Activated naive CD4-positive, alpha-beta T cell treated with anti-CD3 and anti-CD28 coated beads for 36 hours (primary cell): ENCODE measurements at regions of chr19 and their contacts with region 1.

Region 1: DNA sequence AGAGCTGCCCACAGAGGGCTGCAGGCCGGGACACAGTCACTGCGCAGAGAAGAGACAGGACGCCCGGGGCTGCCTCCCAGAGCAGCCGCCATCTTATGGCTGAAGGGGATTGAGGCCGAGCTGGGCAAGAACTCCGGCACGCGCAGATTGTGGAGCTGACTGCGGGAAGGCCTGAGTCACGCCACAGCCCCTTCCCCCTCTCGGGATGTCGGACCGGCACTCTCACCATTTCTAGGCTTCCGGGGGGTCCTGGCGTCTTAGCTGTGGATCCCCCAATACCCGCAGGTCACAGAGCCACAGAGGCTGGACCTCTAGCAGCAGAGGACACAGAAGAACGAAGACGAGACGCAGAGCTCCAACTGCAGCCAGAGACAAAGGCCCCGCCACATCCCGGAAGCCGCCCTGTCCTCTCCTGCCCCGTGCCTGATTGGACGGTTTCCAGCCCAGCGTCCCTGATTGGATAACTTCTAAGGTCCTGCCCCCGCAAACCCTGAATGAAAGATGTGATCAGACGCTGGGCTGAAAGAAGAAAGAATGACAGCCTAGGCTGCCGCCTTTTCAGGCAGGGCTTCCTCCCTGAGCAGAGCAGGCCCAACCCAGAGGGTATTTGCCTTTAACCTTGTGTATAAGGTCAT is at the start of gene ZNF43:
- DNase-seq: peak; percentile 97
- H3K4me3 Mint-ChIP-seq: peak within 1 kb of the TSS; percentile 98
- H3K27ac Mint-ChIP-seq: peak within 1 kb of the TSS; percentile 99
- H3K4me1 Mint-ChIP-seq: peaks cover 37% of the 10 kb centered on the region
- H3K27me3 Mint-ChIP-seq: no peaks in the 10 kb centered on the region
- total RNA-seq, gene ZNF43: 25.8 to 27.8 TPM

Region 2: DNA sequence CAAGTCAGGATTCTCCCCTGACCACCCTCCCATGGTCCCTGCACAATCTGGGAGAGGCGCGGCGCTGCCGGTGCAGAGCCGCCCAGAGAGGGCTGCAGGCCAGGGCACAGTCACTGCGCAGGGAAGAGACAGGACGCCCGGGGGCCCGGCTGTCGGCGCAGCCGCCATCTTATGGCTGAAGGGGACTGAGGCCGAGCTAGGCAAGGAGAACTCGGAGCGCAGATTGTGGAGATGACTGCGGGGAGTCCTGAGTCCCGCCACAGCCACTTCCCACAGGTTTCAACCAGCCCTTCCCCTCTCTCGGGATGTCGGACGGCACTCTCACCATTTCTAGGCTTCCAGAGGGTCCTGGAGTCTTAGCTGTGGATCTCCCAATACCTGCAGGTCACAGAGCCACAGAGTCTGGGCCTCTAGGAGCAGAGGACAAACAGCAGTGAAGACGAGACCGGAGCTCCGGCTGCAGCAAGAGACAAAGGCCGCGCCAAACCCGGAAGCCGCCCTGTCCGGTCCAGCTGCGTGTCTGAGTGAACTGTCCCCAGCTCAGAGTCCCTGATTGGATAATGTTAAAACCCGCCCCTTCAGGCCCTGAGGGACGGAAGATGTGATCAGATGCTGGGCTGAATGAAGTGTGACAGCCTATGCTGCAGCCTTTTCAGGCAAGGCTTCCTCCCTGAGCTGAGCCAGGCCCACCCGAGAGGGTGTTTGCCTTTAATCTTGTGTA is 506.9 kb before region 1 on chr19 and contains the start of gene ZNF708:
- CTCF ChIA-PET with region 1: no interaction called
- intact Hi-C with region 1: loop called (anchors 2 kb)
- DNase-seq: peak; percentile 90
- H3K4me3 Mint-ChIP-seq: peak within 1 kb of the TSS; percentile 98
- H3K27ac Mint-ChIP-seq: peak within 1 kb of the TSS; percentile 98
- H3K4me1 Mint-ChIP-seq: peaks cover 33% of the 10 kb centered on the region
- H3K27me3 Mint-ChIP-seq: no peaks in the 10 kb centered on the region
- total RNA-seq, gene ZNF708: 7.8 to 10.9 TPM